ENCODE measurements at regions of chr19 and their contacts with region 1.

Region 1: GRCh38 chr19:11798391-11799330 is at the start of gene ZNF491:
- DNase-seq: peak; percentile 95
- ATAC-seq: peak; percentile 99
- H3K4me3 Mint-ChIP-seq: peak within 1 kb of the TSS; percentile 73
- H3K27ac Mint-ChIP-seq: peak within 1 kb of the TSS; percentile 13
- H3K4me1 Mint-ChIP-seq: peaks cover 12% of the 10 kb centered on the region
- H3K27me3 Mint-ChIP-seq: no peaks in the 10 kb centered on the region
- total RNA-seq, gene ZNF491: 0.60 to 1.2 TPM

Region 2: DNA sequence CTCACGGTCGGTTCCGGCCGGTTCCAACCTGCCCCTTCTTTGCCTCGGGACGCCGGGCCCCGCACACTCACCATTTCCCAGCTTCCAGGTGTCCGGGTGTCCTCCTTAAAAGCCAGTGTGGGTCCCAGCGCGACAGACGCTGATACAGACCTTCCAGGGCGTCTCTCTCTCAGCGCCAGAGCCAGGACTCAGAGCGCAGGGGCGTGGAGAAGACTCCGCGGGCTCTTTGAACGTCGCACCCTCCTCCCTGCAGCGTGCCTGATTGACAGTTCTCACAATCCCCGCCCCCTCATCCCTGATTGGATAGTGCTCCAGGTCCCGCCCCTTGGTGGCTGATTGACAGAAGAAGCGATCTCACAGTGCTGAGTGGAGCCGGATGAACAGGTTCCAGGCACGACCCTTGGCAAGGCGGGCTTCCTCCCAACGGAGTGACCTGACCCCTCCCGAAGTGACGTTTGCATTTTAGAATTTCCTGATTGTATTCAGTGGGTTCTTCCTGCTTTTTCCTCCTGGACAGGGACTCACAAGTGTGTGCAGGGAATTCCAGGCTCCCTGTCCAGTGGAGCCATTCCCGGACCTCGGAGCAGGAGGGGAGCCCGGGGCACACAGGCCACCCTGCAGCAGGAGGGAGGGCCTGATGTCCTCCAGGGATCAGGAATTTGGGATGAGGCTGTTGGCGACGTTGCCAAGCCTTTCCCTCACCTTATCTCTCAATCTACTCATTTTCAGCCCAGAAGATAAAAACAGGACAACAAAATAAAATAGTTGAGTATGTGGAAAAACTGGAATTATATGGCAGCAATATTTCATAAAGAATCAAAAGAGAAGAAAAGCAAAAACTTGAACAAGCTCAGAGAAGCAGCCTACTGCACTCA is 59.7 kb before region 1 on chr19 and contains the start of gene ZNF823:
- CTCF ChIA-PET with region 1: interaction called, 3 read pairs
- POLR2A ChIA-PET with region 1: no interaction called
- intact Hi-C with region 1: loop called in 1 of 2 experiments (anchors 1 kb)
- DNase-seq: peak; percentile 99
- ATAC-seq: peak; percentile 100
- H3K4me3 Mint-ChIP-seq: peak within 1 kb of the TSS; percentile 99
- H3K27ac Mint-ChIP-seq: peak within 1 kb of the TSS; percentile 92
- H3K4me1 Mint-ChIP-seq: peaks cover 16% of the 10 kb centered on the region
- H3K27me3 Mint-ChIP-seq: no peaks in the 10 kb centered on the region
- total RNA-seq, gene ZNF823: 2.9 to 3.0 TPM

Region 3: DNA sequence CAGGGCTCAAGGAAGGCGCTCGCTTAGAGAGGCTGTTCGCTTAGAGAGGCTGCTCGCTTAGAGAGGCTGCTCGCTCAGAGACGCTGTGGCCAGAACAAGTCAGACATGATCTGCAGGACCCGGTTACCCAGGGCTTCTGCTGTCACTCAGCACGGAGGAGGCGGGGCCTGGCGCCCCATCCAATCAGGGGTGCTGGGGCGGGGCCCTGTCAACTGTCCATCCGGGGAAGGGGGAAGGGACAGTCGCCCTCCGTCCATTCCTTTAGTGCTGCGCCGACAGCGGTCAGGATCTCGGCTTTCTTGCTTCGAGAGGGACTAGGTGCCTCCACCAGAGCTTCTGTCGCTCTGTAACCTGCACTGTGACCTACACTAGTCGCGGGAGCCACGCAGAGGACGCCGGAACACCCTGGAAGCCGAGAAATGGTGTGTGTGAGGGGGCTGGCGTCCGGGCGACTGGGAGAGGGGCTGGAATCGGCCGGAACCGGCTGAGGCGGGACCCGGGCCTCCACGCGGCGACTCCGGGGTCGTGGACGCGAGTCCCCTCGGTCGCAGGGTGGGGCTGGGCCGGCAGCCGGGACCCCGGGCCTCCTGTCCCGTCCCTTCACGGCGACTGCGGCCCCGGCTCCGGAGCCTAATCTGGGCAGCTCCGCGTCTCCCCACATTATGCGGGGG is 15.5 kb after region 1 on chr19 and contains the start of gene ZNF440:
- CTCF ChIA-PET with region 1: interaction called, 20 read pairs
- POLR2A ChIA-PET with region 1: interaction called, 3 read pairs
- intact Hi-C with region 1: loop called (anchors 1 to 2 kb)
- DNase-seq: peak; percentile 95
- ATAC-seq: peak; percentile 100
- H3K4me3 Mint-ChIP-seq: peak within 1 kb of the TSS; percentile 89
- H3K27ac Mint-ChIP-seq: peak within 1 kb of the TSS; percentile 73
- H3K4me1 Mint-ChIP-seq: peaks cover 20% of the 10 kb centered on the region
- H3K27me3 Mint-ChIP-seq: no peaks in the 10 kb centered on the region
- total RNA-seq, gene ZNF440: 7.0 to 7.7 TPM

Region 4: GRCh38 chr19:11868188-11868587 is 69.5 kb after region 1 on chr19:
- CTCF ChIA-PET with region 1: no interaction called
- POLR2A ChIA-PET with region 1: no interaction called
- intact Hi-C with region 1: loop called in 1 of 2 experiments (anchors 5 kb)
- DNase-seq: no peak
- ATAC-seq: no peak
- H3K4me3 Mint-ChIP-seq: no peak overlapping the region
- H3K27ac Mint-ChIP-seq: no peak overlapping the region
- H3K4me1 Mint-ChIP-seq: no peaks in the 10 kb centered on the region
- H3K27me3 Mint-ChIP-seq: no peaks in the 10 kb centered on the region

Region 5: GRCh38 chr19:11964858-11965645 is 166.4 kb after region 1 on chr19 and contains the start of gene ZNF763:
- CTCF ChIA-PET with region 1: interaction called, 13 read pairs
- POLR2A ChIA-PET with region 1: no interaction called
- intact Hi-C with region 1: loop called in 1 of 2 experiments (anchors 1 kb)
- DNase-seq: peak; percentile 94
- ATAC-seq: peak; percentile 98
- H3K4me3 Mint-ChIP-seq: peak within 1 kb of the TSS; percentile 84
- H3K27ac Mint-ChIP-seq: peak within 1 kb of the TSS; percentile 73
- H3K4me1 Mint-ChIP-seq: peaks cover 20% of the 10 kb centered on the region
- H3K27me3 Mint-ChIP-seq: no peaks in the 10 kb centered on the region
- total RNA-seq, gene ZNF763: 1.1 to 1.2 TPM

Region 6: DNA sequence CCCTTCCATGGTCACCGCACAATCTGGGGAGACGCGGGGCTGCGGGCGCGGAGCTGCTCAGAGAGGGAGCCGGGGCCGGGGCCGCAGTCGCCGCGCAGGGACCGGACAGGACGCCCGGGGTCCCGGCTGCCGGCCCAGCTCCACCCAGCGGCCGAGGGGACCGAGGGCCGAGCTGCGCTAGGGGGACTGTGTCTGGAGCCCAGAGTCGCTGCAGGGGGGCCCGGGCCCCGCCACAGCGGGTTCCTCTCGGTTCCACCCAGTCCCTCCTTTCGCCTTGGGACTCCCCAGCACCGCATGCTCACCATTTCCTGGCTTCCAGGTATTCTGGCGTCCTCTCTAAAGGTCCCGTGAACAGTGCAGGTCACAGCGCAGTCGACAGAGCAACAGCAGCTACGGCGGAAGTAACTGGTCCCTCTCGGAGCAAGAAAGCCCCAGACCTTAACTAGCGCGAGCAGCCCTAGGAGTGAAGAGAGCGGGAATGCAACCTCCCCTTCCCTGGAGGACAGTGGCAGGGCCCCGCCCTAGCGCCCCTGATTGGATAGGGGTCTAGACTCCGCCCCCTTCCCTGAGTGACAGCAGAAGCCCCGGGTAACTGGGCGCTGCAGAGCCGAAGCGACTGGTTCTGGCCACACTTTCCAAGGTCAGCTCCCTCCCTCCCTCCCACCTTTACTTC is 254.0 kb after region 1 on chr19 and contains the start of gene ZNF878:
- CTCF ChIA-PET with region 1: interaction called, 6 read pairs
- POLR2A ChIA-PET with region 1: no interaction called
- intact Hi-C with region 1: loop called in 1 of 2 experiments (anchors 1 kb)
- DNase-seq: peak; percentile 82
- ATAC-seq: peak; percentile 95
- H3K4me3 Mint-ChIP-seq: peak within 1 kb of the TSS; percentile 66
- H3K27ac Mint-ChIP-seq: peak within 1 kb of the TSS; percentile 2
- H3K4me1 Mint-ChIP-seq: peaks cover 9% of the 10 kb centered on the region
- H3K27me3 Mint-ChIP-seq: peaks cover 14% of the 10 kb centered on the region
- total RNA-seq, gene ZNF878: 1.1 TPM

Region 7: DNA sequence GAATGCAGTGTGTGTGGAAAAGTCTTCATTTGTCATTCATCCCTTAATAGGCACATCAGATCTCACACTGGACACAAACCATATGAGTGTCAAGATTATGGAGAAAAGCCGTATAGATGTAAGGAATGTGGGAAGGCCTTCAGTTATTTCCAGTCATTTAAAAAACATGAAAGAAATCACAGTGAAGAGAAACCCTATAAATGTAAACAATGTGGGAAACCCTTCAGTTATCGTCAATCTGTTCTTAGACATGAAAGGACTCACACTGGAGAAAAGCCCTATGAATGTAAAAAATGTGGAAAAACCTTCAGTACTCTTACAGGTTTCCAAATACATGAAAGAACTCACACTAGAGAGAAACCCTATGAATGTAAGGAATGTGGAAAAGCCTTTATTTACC is 409.6 kb after region 1 on chr19:
- CTCF ChIA-PET with region 1: no interaction called
- POLR2A ChIA-PET with region 1: no interaction called
- intact Hi-C with region 1: no loop called
- DNase-seq: no peak
- ATAC-seq: no peak
- H3K4me3 Mint-ChIP-seq: no peak overlapping the region
- H3K27ac Mint-ChIP-seq: no peak overlapping the region
- H3K4me1 Mint-ChIP-seq: no peaks in the 10 kb centered on the region
- H3K27me3 Mint-ChIP-seq: no peaks in the 10 kb centered on the region